Activated CD4-positive, alpha-beta memory T cell treated with anti-CD3 and anti-CD28 coated beads for 36 hours (primary cell): ENCODE measurements at regions of chr7 and their contacts with region 1.

Region 1: GRCh38 chr7:116173051-116174028 is 37.0 kb upstream of the TES start:
- DNase-seq: no peak
- H3K4me3 Mint-ChIP-seq: no peak overlapping the region
- H3K27ac Mint-ChIP-seq: no peak overlapping the region
- H3K4me1 Mint-ChIP-seq: no peaks in the 10 kb centered on the region
- H3K27me3 Mint-ChIP-seq: peaks cover 4% of the 10 kb centered on the region

Region 2: DNA sequence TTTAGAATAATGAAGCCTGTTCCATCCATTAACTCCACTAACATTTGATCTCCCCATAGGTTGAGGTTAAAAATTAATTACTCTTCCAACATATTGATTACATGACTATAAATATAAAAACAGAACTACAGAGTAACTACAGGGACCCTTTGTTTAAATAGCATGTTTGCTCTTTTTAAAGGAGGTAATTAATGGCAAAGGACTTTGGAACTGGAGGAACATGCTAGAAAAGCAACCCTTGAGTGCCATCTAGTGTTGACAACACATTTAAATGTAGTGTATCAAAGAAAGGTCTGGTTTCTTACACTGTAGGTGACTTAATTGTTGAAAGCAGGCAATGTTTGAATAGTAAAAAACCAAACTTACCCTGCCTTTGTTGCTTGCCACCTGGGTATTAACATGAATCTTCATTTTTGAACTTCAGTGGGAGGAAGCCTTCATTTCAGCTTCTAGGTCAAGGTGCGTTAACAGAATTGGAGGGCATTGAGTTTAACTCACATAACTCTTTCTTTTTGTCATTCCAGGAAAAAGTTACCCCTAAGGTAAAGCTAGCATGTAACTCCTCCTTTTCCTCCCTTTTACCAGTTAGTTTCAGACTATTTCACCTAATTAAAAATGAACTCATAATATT is 636.4 kb after region 1 on chr7:
- CTCF ChIA-PET with region 1: interaction called, 4 read pairs
- POLR2A ChIA-PET with region 1: no interaction called
- intact Hi-C with region 1: loop called (anchors 1 kb)
- DNase-seq: no peak
- H3K4me3 Mint-ChIP-seq: no peak overlapping the region
- H3K27ac Mint-ChIP-seq: no peak overlapping the region
- H3K4me1 Mint-ChIP-seq: no peaks in the 10 kb centered on the region
- H3K27me3 Mint-ChIP-seq: no peaks in the 10 kb centered on the region